K562 (cell line): ENCODE measurements at regions of chr2 and their contacts with region 1.

Region 1: GRCh38 chr2:74529357-74530238 is at the starts of genes AUP1 and HTRA2:
- DNase-seq: peak; percentile 89 to 99 (median 95)
- ATAC-seq: peak; percentile 94
- H3K4me3 ChIP-seq: peak within 1 kb of the TSS; percentile 96
- H3K27ac ChIP-seq: peak within 1 kb of the TSS; percentile 94
- H3K4me1 ChIP-seq: peaks cover 28 to 35% of the 10 kb centered on the region in 2 experiments
- H3K27me3 ChIP-seq: no peaks in the 10 kb centered on the region
- CTCF ChIP-seq: no peak
- EP300 ChIP-seq: 0 out of 2 replicates have a peak, but pooled peaks have one; percentile 15
- POLR2A ChIP-seq: peak; percentile 95
- RAD21 ChIP-seq: no peak
- polyA plus RNA-seq, gene AUP1: 70.7 to 113 TPM
- polyA plus RNA-seq, gene HTRA2: 66.7 to 71.2 TPM

Region 2: GRCh38 chr2:74238879-74239278 is 290.7 kb before region 1 on chr2:
- CTCF ChIA-PET with region 1: no interaction called
- POLR2A ChIA-PET with region 1: no interaction called
- in situ Hi-C with region 1: no loop called
- intact Hi-C with region 1: no loop called
- DNase-seq: no peak
- ATAC-seq: no peak
- H3K4me3 ChIP-seq: no peak overlapping the region
- H3K27ac ChIP-seq: no peak overlapping the region
- H3K4me1 ChIP-seq: peaks cover 4 to 6% of the 10 kb centered on the region in 2 experiments; a peak in 2 of 5 replicates
- H3K27me3 ChIP-seq: no peaks in the 10 kb centered on the region; a peak in 2 of 5 replicates
- CTCF ChIP-seq: no peak
- EP300 ChIP-seq: no peak
- POLR2A ChIP-seq: no peak
- RAD21 ChIP-seq: no peak

Region 3: GRCh38 chr2:74415762-74416395 is 113.7 kb before region 1 on chr2:
- CTCF ChIA-PET with region 1: no interaction called
- POLR2A ChIA-PET with region 1: no interaction called
- in situ Hi-C with region 1: no loop called
- intact Hi-C with region 1: loop called (anchors 1 kb)
- DNase-seq: no peak
- ATAC-seq: no peak
- H3K4me3 ChIP-seq: no peak overlapping the region
- H3K27ac ChIP-seq: no peak overlapping the region
- H3K4me1 ChIP-seq: peaks cover 3 to 30% of the 10 kb centered on the region in 2 experiments; a peak in 3 of 5 replicates
- H3K27me3 ChIP-seq: peaks cover 4 to 22% of the 10 kb centered on the region in 2 experiments; a peak in 4 of 5 replicates
- CTCF ChIP-seq: no peak
- EP300 ChIP-seq: no peak
- POLR2A ChIP-seq: no peak
- RAD21 ChIP-seq: no peak

Region 4: DNA sequence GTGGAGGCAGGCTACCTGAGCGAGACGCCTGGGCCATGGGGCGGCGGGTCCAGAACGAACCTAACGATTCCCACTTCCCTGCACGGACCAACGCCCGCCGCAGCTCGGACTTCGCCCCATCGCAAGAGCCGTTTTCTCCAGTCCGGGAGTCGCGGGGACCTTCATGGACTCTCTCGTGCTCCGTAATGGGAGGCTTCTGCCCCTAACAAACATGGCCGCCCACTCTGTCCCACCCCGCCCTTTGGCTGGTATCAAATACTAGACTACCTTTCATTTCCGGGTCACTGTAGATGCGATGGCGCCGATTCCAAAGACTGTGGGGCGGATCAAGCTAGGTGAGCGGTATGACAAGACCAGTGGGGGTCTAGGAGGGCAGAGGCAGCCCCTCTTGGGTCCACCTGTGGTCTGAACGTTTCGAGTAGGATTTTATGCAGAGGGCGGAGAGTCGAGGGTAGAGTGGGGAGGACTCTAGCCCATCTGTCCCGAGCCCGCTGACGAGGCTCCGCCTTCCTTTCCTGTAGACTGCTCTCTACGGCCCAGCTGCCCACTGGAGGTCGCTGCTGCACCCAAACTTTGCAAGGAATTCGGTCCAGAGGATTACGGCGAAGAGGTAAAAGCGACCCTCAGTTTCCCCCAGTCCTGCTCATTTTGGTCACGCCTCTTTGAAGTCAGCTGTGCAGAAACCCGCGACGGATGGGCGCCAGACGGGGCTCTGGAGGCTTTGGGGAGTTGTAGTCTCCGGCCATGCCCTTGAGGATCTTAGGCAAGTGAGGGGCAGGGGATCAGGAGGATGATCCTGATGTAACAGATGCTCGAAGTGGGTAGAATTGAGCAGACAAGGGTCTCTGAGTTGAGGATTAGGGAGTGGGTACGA is 46.6 kb before region 1 on chr2 and contains the starts of genes CCDC142 and TTC31:
- CTCF ChIA-PET with region 1: interaction called, 12 read pairs
- POLR2A ChIA-PET with region 1: interaction called, 15 read pairs
- in situ Hi-C with region 1: no loop called
- intact Hi-C with region 1: loop called (anchors 1 kb)
- DNase-seq: peak; percentile 90 to 96 (median 91)
- ATAC-seq: peak; percentile 95
- H3K4me3 ChIP-seq: peak within 1 kb of the TSS; percentile 86
- H3K27ac ChIP-seq: peak within 1 kb of the TSS; percentile 92
- H3K4me1 ChIP-seq: peaks cover 8 to 23% of the 10 kb centered on the region in 2 experiments; a peak in 4 of 5 replicates
- H3K27me3 ChIP-seq: no peaks in the 10 kb centered on the region
- CTCF ChIP-seq: peak; percentile 86 to 95 (median 92)
- EP300 ChIP-seq: 0 out of 2 replicates have a peak, but pooled peaks have one; percentile 1
- POLR2A ChIP-seq: peak; percentile 91
- RAD21 ChIP-seq: peak; percentile 88 to 89
- polyA plus RNA-seq, gene CCDC142: 0.55 to 0.58 TPM
- polyA plus RNA-seq, gene TTC31: 4.7 to 5.0 TPM

Region 5: GRCh38 chr2:74515981-74516633 is 13.5 kb before region 1 on chr2:
- CTCF ChIA-PET with region 1: no interaction called
- POLR2A ChIA-PET with region 1: interaction called, 17 read pairs
- in situ Hi-C with region 1: no loop called
- intact Hi-C with region 1: no loop called
- DNase-seq: peak in 1 of 4 experiments; percentile 49
- ATAC-seq: no peak
- H3K4me3 ChIP-seq: no peak overlapping the region
- H3K27ac ChIP-seq: no peak overlapping the region
- H3K4me1 ChIP-seq: peaks cover 0 to 19% of the 10 kb centered on the region in 2 experiments; a peak in 3 of 5 replicates
- H3K27me3 ChIP-seq: no peaks in the 10 kb centered on the region
- CTCF ChIP-seq: no peak
- EP300 ChIP-seq: no peak
- POLR2A ChIP-seq: no peak
- RAD21 ChIP-seq: no peak

Region 6: GRCh38 chr2:74553892-74554645 is 24.5 kb after region 1 on chr2 and contains the start of gene LOXL3:
- CTCF ChIA-PET with region 1: no interaction called
- POLR2A ChIA-PET with region 1: interaction called, 5 read pairs
- in situ Hi-C with region 1: no loop called
- intact Hi-C with region 1: loop called (anchors 2 kb)
- DNase-seq: peak; percentile 81 to 89 (median 88)
- ATAC-seq: peak; percentile 67
- H3K4me3 ChIP-seq: peak within 1 kb of the TSS; percentile 66
- H3K27ac ChIP-seq: peak within 1 kb of the TSS; percentile 92
- H3K4me1 ChIP-seq: peaks cover 18 to 55% of the 10 kb centered on the region in 2 experiments
- H3K27me3 ChIP-seq: no peaks in the 10 kb centered on the region
- CTCF ChIP-seq: peak in 1 of 3 experiments; percentile 8; a peak in 1 of 6 replicates
- EP300 ChIP-seq: 0 out of 2 replicates have a peak, but pooled peaks have one; percentile 10
- POLR2A ChIP-seq: no peak
- RAD21 ChIP-seq: no peak
- polyA plus RNA-seq, gene LOXL3: 0.24 to 0.30 TPM

Region 7: DNA sequence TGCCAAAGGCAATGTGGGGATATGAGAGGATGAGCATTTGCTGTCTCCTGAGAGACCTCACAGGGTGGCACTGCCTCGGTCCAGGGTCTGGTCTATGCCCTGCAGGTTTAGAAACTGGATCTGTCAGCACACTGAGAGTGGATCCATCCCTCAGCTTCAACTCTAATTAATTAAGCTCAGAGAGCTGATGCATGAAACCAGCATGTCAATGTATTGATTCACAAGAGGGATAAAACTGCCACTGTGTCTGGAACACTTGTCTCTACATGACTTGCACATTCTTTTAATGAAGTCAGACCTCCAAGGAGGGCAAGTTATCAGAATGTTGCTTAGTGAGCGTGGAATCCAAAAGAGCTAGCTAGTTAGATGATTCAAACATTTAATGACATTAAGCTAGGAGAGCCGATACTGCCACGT is 406.4 kb after region 1 on chr2:
- CTCF ChIA-PET with region 1: no interaction called
- POLR2A ChIA-PET with region 1: no interaction called
- in situ Hi-C with region 1: no loop called
- intact Hi-C with region 1: no loop called
- DNase-seq: no peak
- ATAC-seq: no peak; the same call in 2 of the 3 replicates
- H3K4me3 ChIP-seq: no peak overlapping the region
- H3K27ac ChIP-seq: no peak overlapping the region
- H3K4me1 ChIP-seq: peaks cover 0 to 18% of the 10 kb centered on the region in 2 experiments; a peak in 2 of 5 replicates
- H3K27me3 ChIP-seq: no peaks in the 10 kb centered on the region
- CTCF ChIP-seq: no peak
- EP300 ChIP-seq: no peak
- POLR2A ChIP-seq: no peak
- RAD21 ChIP-seq: no peak